ENCODE measurements at regions of chr11 and their contacts with region 1.

Region 1: DNA sequence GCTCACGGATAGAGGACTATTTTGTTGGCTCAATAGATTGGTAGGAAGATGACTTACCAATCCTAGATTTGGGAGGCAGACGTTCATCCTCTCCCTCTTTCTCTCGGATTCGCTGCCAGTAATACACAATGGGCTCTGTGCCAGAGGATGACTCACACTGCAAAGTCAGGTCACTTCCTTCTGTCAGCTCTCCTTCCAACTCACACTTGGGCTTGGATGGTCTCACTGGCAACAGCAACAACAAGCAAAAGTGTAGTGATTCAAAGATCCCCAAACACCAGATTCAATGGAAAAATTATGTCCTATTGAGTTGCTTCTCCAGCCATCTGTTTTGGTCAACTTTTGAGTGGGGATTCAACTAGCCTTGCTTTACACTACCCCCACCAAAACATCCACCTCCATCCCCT is 21.7 kb upstream of the HSPA8 start:
- DNase-seq: peak; percentile 92
- H3K4me3 Mint-ChIP-seq: peak overlapping the region; percentile 78
- H3K27ac Mint-ChIP-seq: peak overlapping the region; percentile 85
- H3K4me1 Mint-ChIP-seq: peaks cover 49% of the 10 kb centered on the region
- H3K27me3 Mint-ChIP-seq: no peaks in the 10 kb centered on the region

Region 2: GRCh38 chr11:123062158-123062891 is 21.3 kb before region 1 on chr11:
- intact Hi-C with region 1: loop called (anchors 1 kb)
- DNase-seq: peak; percentile 100
- H3K4me3 Mint-ChIP-seq: peak overlapping the region; percentile 100
- H3K27ac Mint-ChIP-seq: peak overlapping the region; percentile 99
- H3K4me1 Mint-ChIP-seq: peaks cover 46% of the 10 kb centered on the region
- H3K27me3 Mint-ChIP-seq: peaks cover 1% of the 10 kb centered on the region

Region 3: DNA sequence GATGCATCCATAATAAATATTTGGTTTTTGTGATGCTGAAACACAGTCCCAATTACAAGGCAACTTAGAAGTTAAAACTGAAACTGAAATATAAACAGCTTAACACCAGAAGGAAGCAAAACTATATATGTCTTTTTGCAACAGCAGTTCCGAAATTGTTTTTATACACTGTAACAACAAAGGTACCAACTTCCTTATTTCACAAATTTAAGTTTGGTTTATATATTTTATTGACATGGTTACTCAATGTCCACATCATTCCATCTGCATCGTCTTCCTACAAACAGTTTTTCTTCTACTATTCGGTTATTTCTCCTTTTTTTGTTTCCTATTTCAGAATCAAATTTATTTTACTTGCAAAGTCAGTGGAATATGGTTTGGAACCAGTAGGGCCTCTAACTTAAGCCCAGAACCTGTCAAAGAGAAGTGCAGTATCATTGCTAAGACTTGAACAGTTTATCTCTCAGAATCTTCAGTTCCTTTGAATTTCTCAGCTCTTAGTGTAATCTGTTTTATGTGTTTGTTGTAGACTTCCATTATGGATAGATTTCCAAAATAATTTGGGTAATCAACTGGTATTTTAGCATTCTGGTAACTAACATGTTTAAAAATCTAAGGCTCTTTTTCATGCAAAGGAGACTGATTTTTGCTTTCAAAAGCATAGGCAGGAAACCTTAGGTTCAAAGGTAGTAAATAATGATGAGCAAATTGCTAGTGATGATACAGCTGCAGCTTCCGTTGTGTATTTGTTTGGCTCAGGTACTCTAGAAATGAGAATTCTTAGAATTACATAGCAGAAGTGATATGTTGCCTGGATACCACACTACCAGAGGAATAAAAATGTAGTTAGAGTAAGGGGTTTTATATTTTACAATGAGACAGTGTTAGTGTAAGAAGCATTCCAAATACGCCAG is 13.5 kb before region 1 on chr11:
- intact Hi-C with region 1: loop called (anchors 1 kb)
- DNase-seq: peak; percentile 83
- H3K4me3 Mint-ChIP-seq: peak overlapping the region; percentile 90
- H3K27ac Mint-ChIP-seq: peak overlapping the region; percentile 99
- H3K4me1 Mint-ChIP-seq: peaks cover 54% of the 10 kb centered on the region
- H3K27me3 Mint-ChIP-seq: no peaks in the 10 kb centered on the region

Region 4: DNA sequence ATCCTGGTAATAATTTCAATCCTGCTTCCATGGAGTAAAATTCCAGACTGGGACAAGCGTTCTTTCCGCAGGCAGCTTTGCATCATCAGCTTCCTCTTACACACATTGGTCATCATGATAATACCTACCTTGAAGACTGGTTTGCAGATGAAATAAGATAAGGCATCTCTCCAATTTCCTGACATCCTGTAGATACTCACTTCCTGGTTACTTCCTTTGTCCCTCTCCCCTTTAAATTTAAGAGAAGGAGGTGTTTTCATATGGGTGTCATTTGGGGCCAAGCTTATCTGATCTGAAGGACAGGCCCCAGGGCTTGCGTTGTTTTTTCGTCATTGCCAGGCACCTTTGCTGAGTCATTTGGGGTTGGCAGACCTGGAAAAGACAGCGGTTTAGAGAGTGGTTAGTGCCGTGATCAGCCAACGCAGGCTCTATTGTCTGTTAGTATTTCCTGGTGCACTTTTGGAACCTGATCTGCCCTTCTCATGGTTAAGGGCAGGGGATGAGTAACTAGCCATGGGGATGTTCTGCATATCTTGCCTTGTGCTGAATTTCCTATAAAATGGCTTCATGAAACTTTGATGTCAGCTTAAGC is 370.5 kb after region 1 on chr11:
- intact Hi-C with region 1: loop called (anchors 10 kb)
- DNase-seq: peak; percentile 91
- H3K4me3 Mint-ChIP-seq: peak overlapping the region; percentile 82
- H3K27ac Mint-ChIP-seq: peak overlapping the region; percentile 94
- H3K4me1 Mint-ChIP-seq: peaks cover 79% of the 10 kb centered on the region
- H3K27me3 Mint-ChIP-seq: no peaks in the 10 kb centered on the region

Region 5: DNA sequence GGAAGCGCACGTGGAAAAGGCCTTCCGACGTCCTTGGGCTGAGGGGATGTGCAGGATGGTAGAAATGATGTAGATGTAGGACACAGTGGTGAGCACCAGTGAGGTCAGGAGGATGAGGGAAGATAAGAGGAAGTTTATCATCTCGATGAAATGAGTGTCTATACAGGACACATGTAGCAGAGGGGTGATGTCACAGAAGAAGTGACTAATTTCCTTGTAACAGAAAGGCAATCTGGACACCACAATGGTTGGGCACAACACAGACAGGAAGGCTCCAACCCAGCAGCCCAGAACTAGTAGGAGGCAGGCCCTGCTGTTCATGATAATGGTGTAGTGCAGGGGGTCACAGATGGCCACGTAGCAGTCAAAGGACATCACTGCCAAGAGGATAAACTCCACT is 757.5 kb after region 1 on chr11:
- intact Hi-C with region 1: no loop called
- DNase-seq: peak; percentile 58
- H3K4me3 Mint-ChIP-seq: no peak overlapping the region
- H3K27ac Mint-ChIP-seq: no peak overlapping the region
- H3K4me1 Mint-ChIP-seq: peaks cover 7% of the 10 kb centered on the region
- H3K27me3 Mint-ChIP-seq: peaks cover 10% of the 10 kb centered on the region

Measured in activated CD4-positive, alpha-beta T cell treated with anti-CD3 and anti-CD28 coated beads, Interleukin-2, amount 10 ng/mL, durations not matched to agents 24 days and 14 days (primary cell).